CD8-positive, alpha-beta T cell (primary cell): ENCODE measurements at regions of chr11 and their contacts with region 1.

Region 1: GRCh38 chr11:123062158-123062891 is 389 bp upstream of the HSPA8 start:
- DNase-seq: peak; percentile 98 to 100 (median 99)
- ATAC-seq: peak; percentile 81
- H3K4me3 ChIP-seq: peak overlapping the region; percentile 78 to 97
- H3K4me3 Mint-ChIP-seq: peak overlapping the region; percentile 97
- H3K27ac ChIP-seq: peak overlapping the region; percentile 87 to 98
- H3K27ac Mint-ChIP-seq: peak overlapping the region; percentile 97
- H3K4me1 ChIP-seq: peaks cover 49% of the 10 kb centered on the region
- H3K4me1 Mint-ChIP-seq: peaks cover 63% of the 10 kb centered on the region
- H3K27me3 ChIP-seq: no peaks in the 10 kb centered on the region
- H3K27me3 Mint-ChIP-seq: no peaks in the 10 kb centered on the region
- CTCF ChIP-seq: no peak

Region 2: DNA sequence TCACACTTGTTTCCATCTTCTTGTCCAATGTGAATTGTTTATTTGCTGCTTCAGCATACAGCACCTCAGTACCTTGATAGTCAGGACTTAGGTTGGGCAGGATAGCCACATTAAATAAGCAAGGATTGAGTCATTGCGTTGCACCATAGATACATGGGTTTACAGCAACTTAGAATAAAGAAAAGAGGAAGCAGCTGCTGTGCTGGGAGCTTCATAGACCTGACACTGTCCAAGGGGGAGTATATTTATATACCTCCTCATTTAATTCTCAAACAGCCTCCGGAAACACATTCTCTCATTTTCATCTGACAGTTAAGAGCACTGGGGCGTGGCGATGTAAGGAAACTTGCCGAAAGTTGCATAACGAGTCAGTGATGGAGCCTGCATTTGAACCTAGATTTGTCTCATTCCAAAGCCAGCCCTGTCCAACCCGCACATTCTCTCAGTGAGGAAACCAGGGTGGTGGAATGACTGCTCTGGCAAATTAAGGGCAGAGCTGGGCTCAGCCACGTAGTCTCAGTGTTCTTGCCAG is 364.6 kb before region 1 on chr11:
- CTCF ChIA-PET with region 1: no interaction called
- POLR2A ChIA-PET with region 1: interaction called, 5 read pairs
- intact Hi-C with region 1: loop called in 1 of 2 experiments (anchors 5 kb)
- DNase-seq: peak in 7 of 9 experiments; percentile 14 to 72 (median 60)
- ATAC-seq: peak; percentile 81
- H3K4me3 ChIP-seq: peak overlapping the region; percentile 4 to 25
- H3K4me3 Mint-ChIP-seq: peak overlapping the region; percentile 66
- H3K27ac ChIP-seq: peak overlapping the region; percentile 57 to 64
- H3K27ac Mint-ChIP-seq: peak overlapping the region; percentile 94
- H3K4me1 ChIP-seq: peaks cover 80% of the 10 kb centered on the region
- H3K4me1 Mint-ChIP-seq: peaks cover 91% of the 10 kb centered on the region
- H3K27me3 ChIP-seq: no peaks in the 10 kb centered on the region
- H3K27me3 Mint-ChIP-seq: no peaks in the 10 kb centered on the region
- CTCF ChIP-seq: no peak

Region 3: DNA sequence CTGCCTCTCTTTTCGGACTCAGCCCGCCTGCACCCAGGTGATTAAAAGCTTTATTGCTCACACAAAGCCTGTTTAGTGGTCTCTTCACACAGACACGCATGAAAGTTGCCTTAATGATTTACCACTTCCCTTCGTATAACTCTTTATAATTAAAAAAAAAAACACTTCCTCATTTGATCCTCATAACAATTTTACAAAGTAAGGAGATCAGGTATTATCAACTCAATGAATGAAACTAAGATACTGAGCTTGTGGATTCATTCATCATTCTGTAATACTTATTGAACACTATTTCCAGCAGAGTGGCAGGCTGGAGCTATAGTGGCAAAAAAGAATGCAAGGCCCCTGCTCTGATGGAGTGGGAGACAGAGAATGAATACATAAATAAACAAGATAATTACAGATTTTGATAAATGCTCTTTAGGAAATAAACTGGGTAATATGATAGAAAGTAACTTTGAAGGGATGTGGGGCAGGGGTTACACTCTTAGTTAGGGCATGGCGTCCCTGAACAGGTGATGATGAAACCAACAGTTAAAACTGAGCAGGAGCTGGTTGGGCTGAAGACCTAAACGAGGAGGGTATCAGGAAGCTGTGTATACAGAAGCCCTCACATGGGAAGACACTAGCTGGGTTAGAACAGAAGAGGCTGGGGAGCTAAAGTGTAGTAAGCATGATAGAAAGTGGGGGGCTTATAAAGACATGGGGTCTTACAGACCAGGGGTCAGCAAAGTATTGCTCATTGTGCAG is 229.4 kb before region 1 on chr11:
- CTCF ChIA-PET with region 1: no interaction called
- POLR2A ChIA-PET with region 1: interaction called, 10 read pairs
- intact Hi-C with region 1: no loop called
- DNase-seq: peak in 1 of 9 experiments; percentile 44
- ATAC-seq: peak; percentile 46
- H3K4me3 ChIP-seq: no peak overlapping the region
- H3K4me3 Mint-ChIP-seq: peak overlapping the region; percentile 12
- H3K27ac ChIP-seq: peak overlapping the region; percentile 7 to 42
- H3K27ac Mint-ChIP-seq: peak overlapping the region; percentile 70
- H3K4me1 ChIP-seq: peaks cover 15% of the 10 kb centered on the region
- H3K4me1 Mint-ChIP-seq: peaks cover 43% of the 10 kb centered on the region
- H3K27me3 ChIP-seq: no peaks in the 10 kb centered on the region
- H3K27me3 Mint-ChIP-seq: no peaks in the 10 kb centered on the region
- CTCF ChIP-seq: no peak

Region 4: DNA sequence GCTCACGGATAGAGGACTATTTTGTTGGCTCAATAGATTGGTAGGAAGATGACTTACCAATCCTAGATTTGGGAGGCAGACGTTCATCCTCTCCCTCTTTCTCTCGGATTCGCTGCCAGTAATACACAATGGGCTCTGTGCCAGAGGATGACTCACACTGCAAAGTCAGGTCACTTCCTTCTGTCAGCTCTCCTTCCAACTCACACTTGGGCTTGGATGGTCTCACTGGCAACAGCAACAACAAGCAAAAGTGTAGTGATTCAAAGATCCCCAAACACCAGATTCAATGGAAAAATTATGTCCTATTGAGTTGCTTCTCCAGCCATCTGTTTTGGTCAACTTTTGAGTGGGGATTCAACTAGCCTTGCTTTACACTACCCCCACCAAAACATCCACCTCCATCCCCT is 21.3 kb after region 1 on chr11:
- CTCF ChIA-PET with region 1: interaction called, 7 read pairs
- POLR2A ChIA-PET with region 1: interaction called, 65 read pairs
- intact Hi-C with region 1: no loop called
- DNase-seq: peak in 8 of 9 experiments; percentile 45 to 82 (median 69)
- ATAC-seq: no peak
- H3K4me3 ChIP-seq: no peak overlapping the region
- H3K4me3 Mint-ChIP-seq: peak overlapping the region; percentile 20
- H3K27ac ChIP-seq: peak overlapping the region in 1 of 2 experiments; percentile 42
- H3K27ac Mint-ChIP-seq: peak overlapping the region; percentile 45
- H3K4me1 ChIP-seq: peaks cover 33% of the 10 kb centered on the region
- H3K4me1 Mint-ChIP-seq: peaks cover 44% of the 10 kb centered on the region
- H3K27me3 ChIP-seq: no peaks in the 10 kb centered on the region
- H3K27me3 Mint-ChIP-seq: no peaks in the 10 kb centered on the region
- CTCF ChIP-seq: no peak

Region 5: DNA sequence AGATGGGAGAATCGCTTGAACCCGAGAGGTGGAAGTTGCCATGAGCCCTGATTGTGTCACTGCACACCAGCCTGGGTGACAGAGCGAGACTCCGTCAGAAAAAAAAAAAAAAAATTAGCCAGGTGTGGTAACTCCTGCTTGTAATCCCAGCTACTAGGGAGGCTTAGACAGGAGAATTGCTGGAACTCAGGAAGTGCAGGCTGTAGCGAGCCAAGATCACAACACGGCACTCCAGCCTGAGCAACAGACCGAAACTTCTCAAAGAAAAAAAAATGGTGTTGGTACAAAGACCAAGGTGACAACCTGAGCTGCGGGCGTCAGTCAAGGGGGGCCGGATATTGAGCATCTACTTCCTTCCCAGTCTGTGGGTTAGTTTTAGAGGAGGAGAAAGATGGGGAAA is 48.0 kb after region 1 on chr11:
- CTCF ChIA-PET with region 1: interaction called, 123 read pairs
- POLR2A ChIA-PET with region 1: interaction called, 12 read pairs
- intact Hi-C with region 1: no loop called
- DNase-seq: peak in 2 of 9 experiments; percentile 22 to 41
- ATAC-seq: no peak
- H3K4me3 ChIP-seq: no peak overlapping the region
- H3K4me3 Mint-ChIP-seq: peak overlapping the region; percentile 62
- H3K27ac ChIP-seq: no peak overlapping the region
- H3K27ac Mint-ChIP-seq: peak overlapping the region; percentile 71
- H3K4me1 ChIP-seq: no peaks in the 10 kb centered on the region
- H3K4me1 Mint-ChIP-seq: peaks cover 4% of the 10 kb centered on the region
- H3K27me3 ChIP-seq: no peaks in the 10 kb centered on the region
- H3K27me3 Mint-ChIP-seq: no peaks in the 10 kb centered on the region
- CTCF ChIP-seq: no peak

Region 6: GRCh38 chr11:123233280-123233974 is 171.1 kb after region 1 on chr11:
- CTCF ChIA-PET with region 1: no interaction called
- POLR2A ChIA-PET with region 1: no interaction called
- intact Hi-C with region 1: no loop called
- DNase-seq: peak in 2 of 9 experiments; percentile 27 to 46
- ATAC-seq: peak; percentile 23
- H3K4me3 ChIP-seq: no peak overlapping the region
- H3K4me3 Mint-ChIP-seq: peak overlapping the region; percentile 46
- H3K27ac ChIP-seq: peak overlapping the region in 1 of 2 experiments; percentile 64
- H3K27ac Mint-ChIP-seq: peak overlapping the region; percentile 57
- H3K4me1 ChIP-seq: peaks cover 13% of the 10 kb centered on the region
- H3K4me1 Mint-ChIP-seq: peaks cover 17% of the 10 kb centered on the region
- H3K27me3 ChIP-seq: no peaks in the 10 kb centered on the region
- H3K27me3 Mint-ChIP-seq: peaks cover 2% of the 10 kb centered on the region
- CTCF ChIP-seq: no peak

Region 7: GRCh38 chr11:123741159-123742028 is 679.1 kb after region 1 on chr11 and contains the start of gene ZNF202:
- CTCF ChIA-PET with region 1: no interaction called
- POLR2A ChIA-PET with region 1: no interaction called
- intact Hi-C with region 1: loop called (anchors 10 kb)
- DNase-seq: peak; percentile 78 to 94 (median 93)
- ATAC-seq: peak; percentile 93
- H3K4me3 ChIP-seq: peak within 1 kb of the TSS; percentile 51 to 91
- H3K4me3 Mint-ChIP-seq: peak within 1 kb of the TSS; percentile 94
- H3K27ac ChIP-seq: peak within 1 kb of the TSS; percentile 36 to 84
- H3K27ac Mint-ChIP-seq: peak within 1 kb of the TSS; percentile 92
- H3K4me1 ChIP-seq: peaks cover 26% of the 10 kb centered on the region
- H3K4me1 Mint-ChIP-seq: peaks cover 49% of the 10 kb centered on the region
- H3K27me3 ChIP-seq: no peaks in the 10 kb centered on the region
- H3K27me3 Mint-ChIP-seq: no peaks in the 10 kb centered on the region
- CTCF ChIP-seq: peak; percentile 30
- total RNA-seq, gene ZNF202: 10.7 to 11.4 TPM